GM12878 (cell line): ENCODE measurements at regions of chr20 and their contacts with region 1.

Region 1: GRCh38 chr20:36493013-36493800 is 48.1 kb upstream of the MYL9 start:
- DNase-seq: no peak
- ATAC-seq: peak; percentile 42
- H3K4me3 ChIP-seq: no peak overlapping the region
- H3K27ac ChIP-seq: peak overlapping the region; percentile 59; the same call in 1 of the 2 replicates
- H3K4me1 ChIP-seq: peaks cover 21% of the 10 kb centered on the region
- H3K27me3 ChIP-seq: no peaks in the 10 kb centered on the region
- CTCF ChIP-seq: peak; percentile 21 to 51 (median 48); a peak in 4 of 6 replicates
- EP300 ChIP-seq: no peak
- POLR2A ChIP-seq: no peak
- RAD21 ChIP-seq: peak; percentile 52

Region 2: DNA sequence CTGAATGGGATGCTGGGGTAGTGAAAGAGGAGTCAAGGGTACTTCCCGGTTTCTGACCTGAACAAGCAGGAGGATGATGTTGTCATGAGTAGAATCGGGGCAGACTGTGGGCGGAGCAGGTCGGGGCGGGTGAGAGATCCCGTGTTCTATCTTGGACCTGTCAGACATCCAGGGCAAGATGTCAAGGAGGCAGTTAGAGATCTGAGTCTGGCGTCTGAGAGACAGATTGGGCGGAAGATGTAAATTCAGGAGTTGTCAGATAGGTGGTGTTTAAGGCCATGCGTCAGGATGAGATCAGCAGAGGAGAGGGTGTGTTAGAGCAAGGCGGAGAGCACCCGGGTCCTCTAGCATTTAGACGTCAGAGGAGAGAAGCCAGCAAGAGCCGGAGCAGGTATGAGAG is 71.6 kb before region 1 on chr20:
- CTCF ChIA-PET with region 1: no interaction called
- POLR2A ChIA-PET with region 1: no interaction called
- RAD21 ChIA-PET with region 1: no interaction called
- SMC1A ChIA-PET with region 1: no interaction called
- in situ Hi-C with region 1: no loop called
- intact Hi-C with region 1: no loop called
- DNase-seq: no peak
- ATAC-seq: no peak
- H3K4me3 ChIP-seq: no peak overlapping the region
- H3K27ac ChIP-seq: no peak overlapping the region
- H3K4me1 ChIP-seq: no peaks in the 10 kb centered on the region
- H3K27me3 ChIP-seq: peaks cover 0 to 3% of the 10 kb centered on the region in 2 experiments; a peak in 1 of 4 replicates
- CTCF ChIP-seq: no peak
- EP300 ChIP-seq: no peak
- POLR2A ChIP-seq: no peak
- RAD21 ChIP-seq: no peak

Region 3: DNA sequence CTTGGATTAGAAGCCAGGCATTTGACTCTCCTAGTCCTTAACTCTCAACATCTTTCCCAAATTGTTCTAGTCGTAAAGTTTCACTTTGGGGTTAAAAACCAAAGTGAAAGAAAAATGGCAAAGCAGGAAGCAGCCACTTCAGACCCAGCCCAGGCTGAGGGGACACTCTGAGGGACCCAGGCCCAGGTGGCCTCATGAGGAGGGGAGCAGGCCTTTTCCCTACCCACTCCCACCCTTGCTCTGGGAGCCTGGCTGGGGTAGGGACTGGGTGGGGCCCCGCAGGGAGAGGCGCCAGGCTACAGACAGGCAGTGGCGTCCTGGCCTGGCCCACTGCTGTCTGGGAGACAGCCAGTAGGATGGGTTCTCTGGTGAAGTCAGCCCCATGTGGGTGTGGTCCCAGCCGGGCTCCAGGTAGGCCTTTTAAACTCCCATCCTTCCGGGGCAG is 20.5 kb before region 1 on chr20:
- CTCF ChIA-PET with region 1: interaction called, 10 read pairs
- POLR2A ChIA-PET with region 1: interaction called, 5 read pairs
- RAD21 ChIA-PET with region 1: interaction called, 5 read pairs
- SMC1A ChIA-PET with region 1: interaction called, 17 read pairs
- in situ Hi-C with region 1: no loop called
- intact Hi-C with region 1: no loop called
- DNase-seq: no peak
- ATAC-seq: peak; percentile 78
- H3K4me3 ChIP-seq: peak overlapping the region; percentile 10
- H3K27ac ChIP-seq: peak overlapping the region; percentile 74
- H3K4me1 ChIP-seq: peaks cover 30% of the 10 kb centered on the region
- H3K27me3 ChIP-seq: no peaks in the 10 kb centered on the region
- CTCF ChIP-seq: no peak
- EP300 ChIP-seq: no peak
- POLR2A ChIP-seq: peak; percentile 76
- RAD21 ChIP-seq: no peak

Region 4: GRCh38 chr20:36593347-36593929 is 100.2 kb after region 1 on chr20:
- CTCF ChIA-PET with region 1: no interaction called
- POLR2A ChIA-PET with region 1: no interaction called
- RAD21 ChIA-PET with region 1: no interaction called
- SMC1A ChIA-PET with region 1: no interaction called
- in situ Hi-C with region 1: no loop called
- intact Hi-C with region 1: no loop called
- DNase-seq: no peak
- ATAC-seq: no peak
- H3K4me3 ChIP-seq: no peak overlapping the region; the same call in 1 of the 2 replicates
- H3K27ac ChIP-seq: peak overlapping the region; percentile 99
- H3K4me1 ChIP-seq: peaks cover 36% of the 10 kb centered on the region
- H3K27me3 ChIP-seq: no peaks in the 10 kb centered on the region
- CTCF ChIP-seq: no peak
- EP300 ChIP-seq: no peak
- POLR2A ChIP-seq: no peak
- RAD21 ChIP-seq: no peak

Region 5: GRCh38 chr20:36709126-36709525 is 215.9 kb after region 1 on chr20:
- CTCF ChIA-PET with region 1: no interaction called
- POLR2A ChIA-PET with region 1: no interaction called
- RAD21 ChIA-PET with region 1: no interaction called
- SMC1A ChIA-PET with region 1: no interaction called
- in situ Hi-C with region 1: no loop called
- intact Hi-C with region 1: no loop called
- DNase-seq: no peak
- ATAC-seq: no peak
- H3K4me3 ChIP-seq: no peak overlapping the region
- H3K27ac ChIP-seq: no peak overlapping the region
- H3K4me1 ChIP-seq: no peaks in the 10 kb centered on the region
- H3K27me3 ChIP-seq: no peaks in the 10 kb centered on the region
- CTCF ChIP-seq: no peak
- EP300 ChIP-seq: no peak
- POLR2A ChIP-seq: no peak
- RAD21 ChIP-seq: no peak